ENCODE measurements at regions of chr22 and their contacts with region 1.

Region 1: GRCh38 chr22:23539135-23539838 is 40.8 kb downstream of the IGLL1 start:
- DNase-seq: peak; percentile 90
- H3K4me3 Mint-ChIP-seq: peak overlapping the region; percentile 22
- H3K27ac Mint-ChIP-seq: no peak overlapping the region
- H3K4me1 Mint-ChIP-seq: peaks cover 9% of the 10 kb centered on the region
- H3K27me3 Mint-ChIP-seq: no peaks in the 10 kb centered on the region

Region 2: GRCh38 chr22:23315341-23315917 is 223.9 kb before region 1 on chr22:
- CTCF ChIA-PET with region 1: no interaction called
- intact Hi-C with region 1: loop called (anchors 1 kb)
- DNase-seq: peak; percentile 70
- H3K4me3 Mint-ChIP-seq: no peak overlapping the region
- H3K27ac Mint-ChIP-seq: peak overlapping the region; percentile 30
- H3K4me1 Mint-ChIP-seq: peaks cover 7% of the 10 kb centered on the region
- H3K27me3 Mint-ChIP-seq: no peaks in the 10 kb centered on the region

Region 3: GRCh38 chr22:23385291-23386244 is 153.7 kb before region 1 on chr22:
- CTCF ChIA-PET with region 1: no interaction called
- intact Hi-C with region 1: loop called (anchors 1 kb)
- DNase-seq: peak; percentile 89
- H3K4me3 Mint-ChIP-seq: no peak overlapping the region
- H3K27ac Mint-ChIP-seq: no peak overlapping the region
- H3K4me1 Mint-ChIP-seq: no peaks in the 10 kb centered on the region
- H3K27me3 Mint-ChIP-seq: peaks cover 2% of the 10 kb centered on the region

Region 4: GRCh38 chr22:23402275-23403151 is 136.8 kb before region 1 on chr22:
- CTCF ChIA-PET with region 1: no interaction called
- intact Hi-C with region 1: loop called (anchors 1 kb)
- DNase-seq: peak; percentile 69
- H3K4me3 Mint-ChIP-seq: no peak overlapping the region
- H3K27ac Mint-ChIP-seq: no peak overlapping the region
- H3K4me1 Mint-ChIP-seq: no peaks in the 10 kb centered on the region
- H3K27me3 Mint-ChIP-seq: no peaks in the 10 kb centered on the region

Region 5: GRCh38 chr22:23521441-23522113 is 17.7 kb before region 1 on chr22:
- CTCF ChIA-PET with region 1: no interaction called
- intact Hi-C with region 1: no loop called
- DNase-seq: peak; percentile 73
- H3K4me3 Mint-ChIP-seq: peak overlapping the region; percentile 29
- H3K27ac Mint-ChIP-seq: no peak overlapping the region
- H3K4me1 Mint-ChIP-seq: peaks cover 3% of the 10 kb centered on the region
- H3K27me3 Mint-ChIP-seq: peaks cover 34% of the 10 kb centered on the region

Region 6: DNA sequence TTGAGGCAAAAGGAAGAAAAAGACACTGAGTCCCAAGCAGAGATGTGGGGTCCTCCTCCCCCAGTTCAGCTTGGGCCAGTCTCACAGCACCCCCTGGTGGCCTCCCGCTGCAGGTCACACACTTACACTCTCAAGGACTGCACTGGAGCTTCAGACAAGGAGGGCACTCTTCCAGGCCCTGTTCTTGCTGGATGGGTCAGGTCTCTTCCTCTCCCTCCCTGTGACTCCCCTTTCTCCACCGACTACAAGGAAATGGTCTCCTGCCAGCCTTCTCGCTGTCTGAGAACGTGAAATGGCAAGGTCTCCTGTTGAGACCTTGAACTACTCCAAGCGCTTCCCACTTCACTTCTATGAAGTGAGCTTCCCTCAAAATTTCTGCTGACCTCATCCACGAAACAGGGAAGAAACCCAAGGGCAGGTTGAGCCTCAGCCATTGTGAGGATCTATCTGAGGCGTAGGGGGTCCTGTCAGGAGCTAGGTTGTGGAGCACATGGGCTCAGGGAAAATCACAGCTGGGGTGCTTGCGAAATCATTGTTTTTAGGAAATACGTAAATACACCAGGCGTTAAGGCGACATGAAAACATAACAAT is 52.0 kb after region 1 on chr22:
- CTCF ChIA-PET with region 1: interaction called, 13 read pairs
- intact Hi-C with region 1: loop called (anchors 1 kb)
- DNase-seq: peak; percentile 69
- H3K4me3 Mint-ChIP-seq: no peak overlapping the region
- H3K27ac Mint-ChIP-seq: no peak overlapping the region
- H3K4me1 Mint-ChIP-seq: no peaks in the 10 kb centered on the region
- H3K27me3 Mint-ChIP-seq: no peaks in the 10 kb centered on the region

Region 7: DNA sequence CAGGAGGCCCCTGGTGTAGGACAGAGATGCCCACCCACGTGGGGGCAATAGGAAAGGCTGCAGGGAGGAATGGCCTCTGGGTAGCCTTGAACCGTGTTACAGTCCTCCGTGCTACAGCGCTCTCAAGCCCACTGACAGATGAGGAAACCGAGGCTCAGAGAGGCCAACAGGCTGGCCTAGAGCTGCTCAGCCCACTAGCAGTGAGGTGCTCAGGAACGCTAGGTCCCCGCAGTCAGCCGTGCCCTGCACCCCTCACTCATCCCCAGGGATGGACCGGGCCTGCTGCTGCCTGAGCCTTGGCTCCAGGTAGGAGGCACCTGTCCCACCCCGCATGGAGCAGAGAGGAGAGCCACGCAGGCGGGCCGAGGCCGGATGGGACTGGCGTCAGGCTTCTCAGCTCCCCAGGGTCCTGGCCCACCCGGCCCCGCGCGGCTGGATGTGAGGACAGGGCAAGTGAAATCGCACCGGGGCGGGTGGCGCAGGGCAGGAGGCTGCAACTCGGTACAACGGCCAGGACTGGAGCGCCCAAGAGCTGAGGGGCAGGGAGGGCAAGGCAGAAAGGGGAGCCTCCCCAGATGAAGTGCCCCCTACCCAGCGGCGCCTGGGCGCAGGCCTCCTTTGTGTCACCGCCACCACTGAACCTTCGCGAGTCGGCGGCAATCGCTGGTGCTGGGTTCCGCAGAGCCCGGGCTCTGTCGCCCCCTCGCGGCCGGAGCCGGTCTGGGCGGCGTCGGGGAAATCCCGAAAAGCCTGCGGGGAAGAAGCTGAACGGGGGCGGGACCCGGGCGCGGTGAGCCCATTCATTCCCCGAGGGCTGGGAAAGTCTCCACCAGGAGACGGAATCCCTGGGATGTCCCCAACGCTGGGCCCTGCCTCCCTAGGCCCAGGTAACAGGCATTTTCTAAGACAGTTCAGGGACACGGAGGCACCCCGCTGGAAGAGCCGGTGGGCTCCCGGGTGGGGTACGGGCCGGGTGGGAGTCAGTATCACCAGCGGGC is 310.0 kb after region 1 on chr22:
- CTCF ChIA-PET with region 1: interaction called, 9 read pairs
- intact Hi-C with region 1: loop called (anchors 5 kb)
- DNase-seq: peak; percentile 88
- H3K4me3 Mint-ChIP-seq: no peak overlapping the region
- H3K27ac Mint-ChIP-seq: no peak overlapping the region
- H3K4me1 Mint-ChIP-seq: peaks cover 2% of the 10 kb centered on the region
- H3K27me3 Mint-ChIP-seq: peaks cover 3% of the 10 kb centered on the region